Right lobe of liver (tissue), 6 donors: ENCODE measurements at regions of chr7 and their contacts with region 1.

Region 1: GRCh38 chr7:117119192-117119924 is 166.1 kb downstream of the ST7 start:
- DNase-seq: peak; percentile 68 to 80 (median 77)
- ATAC-seq: peak; percentile 77 to 89 (median 86)
- H3K4me3 ChIP-seq: no peak overlapping the region
- H3K27ac ChIP-seq: no peak overlapping the region
- H3K4me1 ChIP-seq: peaks cover 0 to 6% (median 2%) of the 10 kb centered on the region in 4 donors
- H3K27me3 ChIP-seq: no peaks in the 10 kb centered on the region
- CTCF ChIP-seq: peak; percentile 87 to 90 (median 88)
- POLR2A ChIP-seq: no peak

Region 2: DNA sequence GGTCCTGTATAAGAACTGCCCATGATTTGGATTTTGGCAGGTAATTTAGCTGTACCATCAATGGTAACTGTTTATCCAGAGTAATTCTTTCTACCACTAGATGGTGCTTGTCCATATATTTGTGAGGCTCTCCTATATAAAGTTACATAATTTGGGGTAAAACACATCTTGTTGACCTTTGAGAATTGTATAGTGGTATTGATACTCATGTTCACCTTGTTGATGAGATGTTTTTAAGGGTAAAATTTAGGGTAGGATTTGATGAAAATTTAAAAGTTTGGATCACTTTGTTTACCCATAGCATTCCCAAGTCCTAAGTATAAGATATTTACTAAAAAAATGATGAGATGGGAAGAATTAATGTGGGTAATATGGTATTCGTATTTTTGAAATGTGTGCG is 134.4 kb before region 1 on chr7:
- intact Hi-C with region 1: loop called (anchors 10 kb)
- DNase-seq: no peak
- ATAC-seq: peak; percentile 70 to 80 (median 74)
- H3K4me3 ChIP-seq: no peak overlapping the region
- H3K27ac ChIP-seq: no peak overlapping the region
- H3K4me1 ChIP-seq: no peaks in the 10 kb centered on the region
- H3K27me3 ChIP-seq: no peaks in the 10 kb centered on the region
- CTCF ChIP-seq: peak; percentile 53 to 81 (median 72)
- POLR2A ChIP-seq: no peak

Region 3: DNA sequence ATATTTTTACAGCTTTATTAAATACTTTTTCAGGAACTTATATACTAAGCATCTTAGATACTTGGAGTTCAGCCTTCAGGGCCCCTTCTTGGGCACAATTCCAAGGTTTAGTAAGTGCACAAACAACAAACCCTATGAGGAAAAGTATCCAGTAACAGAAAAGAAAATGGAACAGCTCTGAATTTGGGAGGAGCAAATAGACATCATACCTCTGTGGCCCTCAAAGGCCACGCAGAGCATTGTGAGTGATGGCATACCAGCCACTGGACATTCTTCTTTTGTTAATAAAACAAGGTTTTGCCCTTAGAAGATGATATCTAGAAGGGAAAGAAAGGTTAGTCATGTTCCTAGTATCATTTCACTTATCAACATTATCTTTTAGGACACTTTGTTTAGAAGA is 120.0 kb before region 1 on chr7:
- intact Hi-C with region 1: loop called in 1 of 2 experiments (anchors 10 kb)
- DNase-seq: no peak
- ATAC-seq: no peak
- H3K4me3 ChIP-seq: no peak overlapping the region
- H3K27ac ChIP-seq: no peak overlapping the region
- H3K4me1 ChIP-seq: no peaks in the 10 kb centered on the region
- H3K27me3 ChIP-seq: no peaks in the 10 kb centered on the region
- CTCF ChIP-seq: no peak
- POLR2A ChIP-seq: no peak